Heart left ventricle (tissue), 16 donors: ENCODE measurements at regions of chr16 and their contacts with region 1.

Region 1: DNA sequence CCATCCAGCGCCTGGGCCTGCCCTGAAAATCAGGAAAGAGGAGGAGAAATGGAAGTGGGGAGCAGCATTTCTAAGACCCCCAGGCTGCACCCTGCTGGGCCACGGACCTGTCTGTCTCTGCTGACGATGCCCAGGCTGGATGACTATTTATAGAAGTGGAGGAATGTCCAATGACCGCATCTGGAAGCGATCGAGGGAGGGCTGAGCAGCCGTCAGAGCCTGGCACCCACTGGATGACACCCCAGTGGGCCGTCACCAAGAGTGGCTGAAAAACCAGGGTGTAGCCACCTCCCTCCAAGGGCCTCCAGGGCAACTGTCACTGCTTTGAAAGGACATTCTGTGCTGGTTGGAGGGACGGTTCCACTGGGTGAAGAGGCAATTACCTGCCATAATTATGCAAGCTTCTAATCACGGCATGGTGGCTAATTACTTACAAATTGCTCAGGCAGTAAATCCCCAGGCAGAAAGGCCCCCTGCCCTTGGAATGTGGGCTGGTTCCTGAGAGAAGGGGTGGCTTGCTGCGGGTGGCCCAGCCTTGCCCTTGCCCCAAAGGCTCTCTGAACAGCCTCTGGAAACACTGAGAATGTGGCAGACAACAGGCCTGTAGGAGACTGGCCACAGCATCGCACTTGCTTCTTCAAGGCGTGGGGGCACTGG is 332.1 kb downstream of the C16orf95 start:
- DNase-seq: peak; percentile 70 to 89 (median 76)
- ATAC-seq: peak; percentile 93 to 97 (median 96)
- H3K4me3 ChIP-seq: no peak overlapping the region
- H3K27ac ChIP-seq: peak overlapping the region in 11 of 12 donors; percentile 22 to 88 (median 76)
- H3K4me1 ChIP-seq: peaks cover 0 to 23% (median 0%) of the 10 kb centered on the region in 12 donors
- H3K27me3 ChIP-seq: no peaks in the 10 kb centered on the region
- CTCF ChIP-seq: no peak
- POLR2A ChIP-seq: no peak

Region 2: DNA sequence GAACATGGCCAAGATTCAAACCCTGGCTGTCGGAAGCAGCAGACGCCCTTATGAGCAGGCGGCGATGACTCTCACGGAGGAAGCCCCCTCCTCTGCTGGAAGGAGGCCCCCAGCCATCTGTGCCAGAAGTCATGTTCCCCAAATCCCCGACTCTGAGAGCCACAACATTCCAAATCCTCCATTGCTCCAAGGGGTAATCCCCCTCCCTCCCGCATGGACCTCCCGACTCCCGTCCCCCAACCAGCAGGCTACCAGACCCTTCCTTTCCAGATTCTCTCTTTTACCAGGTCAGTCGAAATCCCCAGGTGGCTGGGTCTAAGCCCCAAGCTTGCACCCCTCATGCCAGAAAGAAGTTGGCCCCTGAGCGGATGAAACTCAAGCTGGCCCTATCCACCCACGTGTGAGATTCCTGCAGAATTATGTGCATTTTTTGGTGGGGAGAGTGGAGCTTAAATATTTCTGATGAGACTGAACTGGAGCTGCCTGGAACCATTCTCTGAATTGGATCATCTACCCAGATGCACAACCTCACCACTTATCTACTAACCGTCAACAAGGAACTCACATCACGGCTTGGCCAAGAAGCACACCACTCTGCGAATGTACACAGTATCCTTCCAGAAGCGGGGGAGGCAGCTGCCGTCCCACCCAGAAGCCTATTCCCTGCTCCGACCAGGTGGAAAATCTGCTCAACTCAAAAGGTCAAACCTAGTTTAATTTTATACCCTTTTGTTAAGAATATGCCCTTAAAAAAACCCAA is 48.6 kb after region 1 on chr16:
- intact Hi-C with region 1: loop called in 1 of 10 experiments (anchors 5 kb)
- DNase-seq: peak in 4 of 5 donors; percentile 46 to 68 (median 63)
- ATAC-seq: peak; percentile 71 to 90 (median 79)
- H3K4me3 ChIP-seq: no peak overlapping the region
- H3K27ac ChIP-seq: peak overlapping the region in 8 of 12 donors; percentile 20 to 67 (median 60)
- H3K4me1 ChIP-seq: peaks cover 0 to 27% (median 14%) of the 10 kb centered on the region in 12 donors
- H3K27me3 ChIP-seq: no peaks in the 10 kb centered on the region
- CTCF ChIP-seq: no peak
- POLR2A ChIP-seq: no peak

Region 3: DNA sequence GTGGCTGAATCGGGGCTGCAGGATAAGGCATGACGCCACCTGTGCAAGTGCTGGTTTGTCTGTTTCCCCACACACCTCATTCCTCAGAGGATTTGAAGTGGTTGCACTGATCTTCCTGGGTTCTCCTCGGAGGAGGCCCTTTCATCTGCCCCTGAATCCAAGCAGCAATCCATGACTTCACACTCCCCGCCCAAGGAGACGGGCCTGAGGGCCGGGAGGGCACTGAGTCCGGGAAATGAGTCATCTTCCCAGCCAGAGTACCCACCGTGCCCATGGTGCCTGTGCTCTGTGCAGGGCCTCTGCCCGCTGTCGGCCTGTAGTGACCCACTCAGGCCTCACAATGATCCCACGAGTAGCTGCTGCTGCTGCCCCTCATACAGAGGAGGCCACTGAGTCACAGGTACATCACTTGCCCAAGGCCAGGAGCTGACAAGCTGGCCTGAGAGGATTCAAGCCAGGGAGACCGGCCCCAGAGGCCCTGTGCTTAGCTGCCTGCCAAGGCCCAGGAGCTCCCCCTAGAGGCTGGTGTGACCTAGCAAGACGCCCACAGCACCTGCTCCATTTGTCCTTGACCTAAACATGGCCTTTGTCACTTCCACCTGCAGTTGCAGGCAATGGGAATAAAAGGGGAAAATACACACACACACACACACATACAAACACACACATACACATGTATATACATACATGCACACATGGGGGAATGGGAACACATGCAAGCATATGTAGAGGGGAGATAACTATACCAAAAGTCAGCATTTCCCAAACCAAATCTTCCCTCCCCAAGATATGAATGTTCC is 92.0 kb after region 1 on chr16:
- intact Hi-C with region 1: no loop called
- DNase-seq: peak in 2 of 5 donors; percentile 41 to 46
- ATAC-seq: peak in 3 of 4 donors; percentile 54 to 71 (median 56)
- H3K4me3 ChIP-seq: no peak overlapping the region
- H3K27ac ChIP-seq: no peak overlapping the region
- H3K4me1 ChIP-seq: no peaks in the 10 kb centered on the region
- H3K27me3 ChIP-seq: peaks cover 0 to 6% (median 0%) of the 10 kb centered on the region in 9 donors
- CTCF ChIP-seq: peak; percentile 16 to 69 (median 46)
- POLR2A ChIP-seq: no peak

Region 4: GRCh38 chr16:87233926-87234325 is 248.8 kb after region 1 on chr16:
- intact Hi-C with region 1: no loop called
- DNase-seq: no peak
- ATAC-seq: no peak
- H3K4me3 ChIP-seq: no peak overlapping the region
- H3K27ac ChIP-seq: no peak overlapping the region
- H3K4me1 ChIP-seq: no peaks in the 10 kb centered on the region
- H3K27me3 ChIP-seq: peaks cover 0 to 8% (median 0%) of the 10 kb centered on the region in 9 donors
- CTCF ChIP-seq: peak in 1 of 12 donors; percentile 18
- POLR2A ChIP-seq: no peak